ENCODE measurements at regions of chrX and their contacts with region 1.

Region 1: DNA sequence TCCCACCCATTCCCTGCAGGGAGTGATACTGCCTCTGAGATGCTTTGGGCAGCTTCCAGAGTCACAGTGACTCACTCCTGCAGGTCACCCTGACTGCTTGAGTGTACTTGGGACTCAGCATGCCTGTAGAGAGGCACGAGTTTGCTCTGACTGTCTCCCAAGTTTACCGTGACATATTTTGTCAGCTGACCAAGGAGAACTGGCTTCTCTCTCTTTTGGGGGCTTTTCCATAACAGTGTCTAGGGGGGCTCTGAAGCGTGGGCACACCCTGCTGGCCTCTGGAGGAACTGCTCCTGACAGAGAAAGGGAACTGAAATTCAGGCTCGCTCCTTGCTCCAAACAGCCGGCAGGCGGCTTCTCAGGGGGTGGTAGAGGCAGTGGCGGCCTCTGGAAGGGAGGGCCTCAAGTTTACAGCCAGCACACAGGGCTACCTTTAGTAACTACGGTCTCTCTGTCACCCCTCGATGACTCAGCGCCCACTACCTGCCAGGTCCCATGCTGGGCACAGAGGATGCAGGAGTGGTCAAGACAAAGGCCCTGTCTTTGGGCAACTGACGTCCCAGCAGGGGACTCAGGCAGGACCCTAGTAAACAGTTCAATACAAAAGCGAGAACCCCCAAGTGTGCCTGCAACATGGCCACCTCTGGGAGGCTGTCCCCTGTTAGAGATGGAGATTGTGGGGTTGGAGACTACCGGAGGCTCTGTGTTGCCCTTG is 17.8 kb downstream of the ZNF185 start:
- DNase-seq: peak; percentile 77
- H3K4me3 ChIP-seq: no peak overlapping the region
- H3K27ac ChIP-seq: no peak overlapping the region
- H3K4me1 ChIP-seq: peaks cover 0 to 14% of the 10 kb centered on the region in 2 experiments; a peak in 1 of 4 replicates
- H3K27me3 ChIP-seq: peaks cover 11% of the 10 kb centered on the region
- CTCF ChIP-seq: peak; percentile 75
- EP300 ChIP-seq: no peak
- RAD21 ChIP-seq: peak; percentile 57

Region 2: DNA sequence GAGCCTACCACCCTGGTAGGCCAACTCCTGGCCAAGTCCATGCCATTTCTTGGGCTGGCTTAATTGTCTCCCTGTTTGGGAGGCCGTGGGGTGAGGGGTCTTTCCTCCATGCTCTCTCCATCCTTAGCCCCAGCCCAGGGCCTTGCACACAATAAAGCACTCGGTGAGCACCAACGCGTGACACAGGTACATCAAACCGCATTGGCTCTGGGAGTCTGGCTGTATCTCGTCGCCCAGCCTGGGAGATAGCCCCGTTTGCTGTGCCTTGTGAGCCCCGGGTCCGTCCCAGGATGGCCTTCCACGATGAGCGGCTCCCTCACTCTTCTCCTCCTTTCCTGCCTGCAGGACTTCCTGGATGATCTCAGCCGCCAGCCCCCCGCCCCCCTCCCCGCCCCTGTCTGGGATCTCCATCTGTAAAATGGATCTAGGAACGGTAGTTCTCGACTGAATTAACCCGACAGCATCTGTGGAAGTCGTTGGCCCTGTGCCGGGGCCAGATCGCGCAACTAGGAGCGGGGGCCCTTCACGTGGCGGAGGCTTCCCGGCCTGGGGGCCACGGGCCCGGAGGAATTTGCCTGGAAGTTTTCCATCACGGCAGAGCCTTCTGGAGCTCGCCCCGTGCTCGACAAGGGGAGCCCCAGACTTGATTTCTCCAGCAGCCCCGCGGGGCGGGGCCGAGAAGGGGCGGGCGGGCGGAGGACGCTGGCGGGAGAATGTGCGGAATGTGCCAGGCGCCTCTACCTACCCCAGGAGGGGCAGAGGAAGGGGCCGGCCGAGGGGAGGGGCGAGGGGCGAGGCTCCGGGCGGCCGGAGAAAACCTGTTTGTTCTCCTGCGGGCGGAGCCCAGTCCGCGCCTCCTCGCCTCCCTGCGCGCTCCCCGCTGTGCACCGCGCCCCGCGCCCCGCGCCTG is 18.2 kb before region 1 on chrX and contains the start of gene ZNF185:
- CTCF ChIA-PET with region 1: interaction called, 37 read pairs
- POLR2A ChIA-PET with region 1: no interaction called
- DNase-seq: peak; percentile 70
- H3K4me3 ChIP-seq: peak within 1 kb of the TSS; percentile 46 to 47; a peak in 3 of 4 replicates
- H3K27ac ChIP-seq: no peak within 1 kb of the TSS
- H3K4me1 ChIP-seq: peaks cover 0 to 2% of the 10 kb centered on the region in 2 experiments; a peak in 1 of 4 replicates
- H3K27me3 ChIP-seq: no peaks in the 10 kb centered on the region; the same call in 1 of the 2 replicates
- CTCF ChIP-seq: no peak
- EP300 ChIP-seq: no peak
- RAD21 ChIP-seq: no peak
- polyA plus RNA-seq, gene ZNF185: 10.3 and 10.6 TPM in 2 replicates

Region 3: GRCh38 chrX:152904151-152905080 is 11.3 kb before region 1 on chrX:
- CTCF ChIA-PET with region 1: interaction called, 71 read pairs
- POLR2A ChIA-PET with region 1: no interaction called
- DNase-seq: peak; percentile 86
- H3K4me3 ChIP-seq: no peak overlapping the region; a peak in 1 of 4 replicates
- H3K27ac ChIP-seq: no peak overlapping the region
- H3K4me1 ChIP-seq: peaks cover 6 to 32% of the 10 kb centered on the region in 2 experiments; a peak in 2 of 4 replicates
- H3K27me3 ChIP-seq: no peaks in the 10 kb centered on the region; the same call in 1 of the 2 replicates
- CTCF ChIP-seq: peak; percentile 85
- EP300 ChIP-seq: no peak
- RAD21 ChIP-seq: peak; percentile 60

Region 4: GRCh38 chrX:152926279-152926678 is 10.6 kb after region 1 on chrX:
- CTCF ChIA-PET with region 1: interaction called, 40 read pairs
- POLR2A ChIA-PET with region 1: no interaction called
- DNase-seq: peak; percentile 70
- H3K4me3 ChIP-seq: no peak overlapping the region
- H3K27ac ChIP-seq: no peak overlapping the region
- H3K4me1 ChIP-seq: peaks cover 0 to 3% of the 10 kb centered on the region in 2 experiments; a peak in 1 of 4 replicates
- H3K27me3 ChIP-seq: peaks cover 4% of the 10 kb centered on the region; the same call in 1 of the 2 replicates
- CTCF ChIP-seq: peak; percentile 68
- EP300 ChIP-seq: no peak
- RAD21 ChIP-seq: peak; percentile 63

Region 5: DNA sequence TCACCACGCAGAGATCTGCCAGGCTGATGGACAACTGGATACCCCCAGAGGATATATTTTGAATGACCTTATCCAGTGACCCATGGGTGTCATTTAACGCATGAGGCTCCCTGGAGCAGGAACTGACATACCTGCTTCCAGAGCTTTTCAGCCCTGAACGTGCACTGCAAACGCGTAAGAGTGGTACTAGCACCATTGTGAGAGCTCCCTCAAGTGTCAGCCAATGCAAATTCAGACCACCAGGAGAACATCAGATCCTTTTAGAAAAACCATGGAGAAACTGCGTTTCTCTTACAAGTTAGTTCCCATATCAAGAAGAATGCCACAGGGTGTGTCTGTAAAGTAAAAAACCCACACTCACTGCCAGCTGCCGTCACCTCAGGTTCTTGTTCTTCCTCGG is 522.8 kb after region 1 on chrX:
- CTCF ChIA-PET with region 1: no interaction called
- POLR2A ChIA-PET with region 1: no interaction called
- DNase-seq: no peak
- H3K4me3 ChIP-seq: no peak overlapping the region
- H3K27ac ChIP-seq: no peak overlapping the region
- H3K4me1 ChIP-seq: no peaks in the 10 kb centered on the region
- H3K27me3 ChIP-seq: peaks cover 46% of the 10 kb centered on the region
- CTCF ChIP-seq: peak; percentile 31; the same call in 1 of the 2 replicates
- EP300 ChIP-seq: no peak
- RAD21 ChIP-seq: peak; percentile 59

Measured in SK-N-SH (cell line).